GM13976 (cell line): ENCODE measurements at regions of chr3 and their contacts with region 1.

Region 1: DNA sequence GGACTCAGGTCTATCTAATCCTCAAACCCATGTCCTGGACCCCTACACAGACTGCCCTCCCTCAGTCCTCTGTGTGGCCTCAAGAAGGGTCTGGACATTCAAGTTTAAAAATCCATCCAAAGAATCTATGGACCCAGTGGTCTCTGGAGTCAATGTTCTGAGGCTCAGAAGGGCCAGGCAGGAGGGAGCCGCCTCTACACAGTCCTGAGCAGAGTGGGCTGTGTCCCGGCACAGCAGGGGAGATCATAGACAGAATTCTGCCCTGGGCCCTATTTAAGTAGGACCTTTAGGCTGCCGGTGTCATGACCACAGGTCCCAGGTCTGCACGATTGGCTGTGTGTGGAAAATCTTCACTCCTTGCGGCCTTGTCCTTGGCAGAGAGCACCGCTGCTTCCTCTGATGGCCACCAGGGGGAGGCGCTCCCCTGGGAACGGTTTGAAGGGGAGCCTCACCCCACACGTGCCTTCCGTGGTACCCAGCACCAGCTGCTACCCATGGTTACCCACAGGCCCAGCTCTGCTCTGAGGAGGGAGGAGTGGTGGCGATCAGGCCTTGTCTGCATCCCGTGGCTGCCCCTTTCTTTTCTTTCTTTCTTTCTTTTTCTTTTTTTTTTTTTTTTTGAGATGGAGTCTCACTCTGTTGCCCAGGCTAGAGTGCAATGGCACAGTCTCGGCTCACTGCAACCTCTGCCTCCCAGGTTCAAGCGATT is 37.9 kb downstream of the CHRD start:
- DNase-seq: peak; percentile 82
- CTCF ChIP-seq: peak; percentile 77

Region 2: GRCh38 chr3:184284708-184285107 is 133.1 kb before region 1 on chr3:
- in situ Hi-C with region 1: no loop called
- DNase-seq: peak; percentile 66
- CTCF ChIP-seq: no peak

Region 3: GRCh38 chr3:184523825-184524615 is 106.2 kb after region 1 on chr3:
- in situ Hi-C with region 1: loop called (anchors 10 kb)
- DNase-seq: no peak
- CTCF ChIP-seq: no peak